Keratinocyte (primary cell): ENCODE measurements at regions of chr2 and their contacts with region 1.

Region 1: DNA sequence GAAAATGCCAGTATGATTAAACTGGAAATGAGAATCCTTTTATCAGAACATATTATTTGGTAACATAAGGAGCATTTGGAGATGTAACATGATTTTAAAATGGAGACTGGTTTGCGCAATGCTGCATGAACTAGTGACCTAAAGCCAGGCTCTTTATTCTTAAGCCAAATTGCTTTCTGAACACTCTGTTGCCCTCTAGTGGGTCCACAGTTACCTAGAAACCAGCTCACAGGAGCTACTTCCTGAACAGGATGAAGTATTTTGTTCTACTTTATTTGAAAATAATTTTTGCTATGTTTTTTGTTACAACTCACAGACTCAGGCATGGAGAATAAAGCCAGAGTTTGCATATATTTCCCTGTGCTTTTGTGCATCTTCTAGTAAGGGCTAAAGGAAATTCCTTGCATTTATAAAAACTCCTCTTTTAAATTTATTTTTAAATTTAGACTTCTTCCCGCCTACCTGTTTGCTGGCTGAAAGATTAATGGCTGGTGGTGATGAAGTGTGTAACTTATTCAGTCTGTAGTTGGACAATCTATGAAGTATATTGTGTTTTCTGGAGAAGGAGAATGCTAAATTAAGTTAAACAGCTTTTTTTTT is 146.7 kb downstream of the PARD3B start:
- DNase-seq: peak; percentile 25
- H3K4me3 ChIP-seq: no peak overlapping the region
- H3K27ac ChIP-seq: no peak overlapping the region
- H3K4me1 ChIP-seq: no peaks in the 10 kb centered on the region
- H3K27me3 ChIP-seq: no peaks in the 10 kb centered on the region
- CTCF ChIP-seq: peak; percentile 58 to 78 (median 75)

Region 2: GRCh38 chr2:204441316-204441715 is 250.7 kb before region 1 on chr2:
- dilution Hi-C with region 1: loop called (anchors 10 kb)
- DNase-seq: no peak
- H3K4me3 ChIP-seq: no peak overlapping the region
- H3K27ac ChIP-seq: no peak overlapping the region
- H3K4me1 ChIP-seq: no peaks in the 10 kb centered on the region
- H3K27me3 ChIP-seq: no peaks in the 10 kb centered on the region
- CTCF ChIP-seq: no peak

Region 3: DNA sequence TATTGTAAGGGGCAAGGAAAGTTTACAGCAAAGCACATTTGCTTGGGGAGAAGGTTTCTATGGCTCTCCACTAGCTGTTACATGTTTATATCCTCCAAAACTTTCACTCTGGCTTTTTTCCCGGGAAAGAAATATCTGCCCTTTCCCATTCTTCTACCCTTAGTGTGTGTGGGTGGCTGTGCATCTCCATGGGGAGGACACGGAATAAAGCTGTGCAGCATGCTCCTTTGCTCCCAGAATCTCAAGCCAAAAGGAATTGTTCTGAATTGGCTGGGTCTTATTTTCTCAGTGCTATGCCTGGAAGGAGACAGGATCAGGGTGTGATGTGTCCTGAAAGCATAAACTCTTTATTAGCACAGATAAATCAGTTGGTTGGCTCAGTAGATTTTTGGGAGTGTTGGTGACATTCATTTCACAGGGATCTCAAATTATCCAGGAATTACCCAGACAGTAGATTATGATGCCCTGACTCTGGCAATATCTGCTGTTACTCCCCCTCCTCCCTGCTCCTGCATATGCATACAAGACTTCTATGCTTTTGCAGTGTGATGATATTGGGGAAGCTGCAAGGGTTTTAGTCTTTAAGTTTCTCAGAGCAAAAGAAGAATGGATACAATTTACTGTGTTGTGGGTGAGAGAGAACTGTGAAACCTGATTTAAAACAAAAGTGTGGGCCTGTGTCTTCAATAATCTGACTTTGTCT is 83.6 kb before region 1 on chr2:
- dilution Hi-C with region 1: no loop called
- DNase-seq: no peak
- H3K4me3 ChIP-seq: no peak overlapping the region
- H3K27ac ChIP-seq: no peak overlapping the region
- H3K4me1 ChIP-seq: no peaks in the 10 kb centered on the region
- H3K27me3 ChIP-seq: no peaks in the 10 kb centered on the region
- CTCF ChIP-seq: no peak

Region 4: GRCh38 chr2:204849892-204850291 is 157.9 kb after region 1 on chr2:
- dilution Hi-C with region 1: no loop called
- DNase-seq: peak; percentile 26
- H3K4me3 ChIP-seq: peak overlapping the region in 1 of 3 experiments; percentile 47
- H3K27ac ChIP-seq: peak overlapping the region; percentile 18
- H3K4me1 ChIP-seq: peaks cover 18% of the 10 kb centered on the region
- H3K27me3 ChIP-seq: no peaks in the 10 kb centered on the region
- CTCF ChIP-seq: no peak